Body of pancreas (tissue), 4 donors: ENCODE measurements at regions of chr2 and their contacts with region 1.

Region 1: GRCh38 chr2:209977386-209978239 is 24.8 kb upstream of the RPE start:
- DNase-seq: no peak
- ATAC-seq: peak; percentile 62
- H3K4me3 ChIP-seq: no peak overlapping the region
- H3K27ac ChIP-seq: no peak overlapping the region
- H3K4me1 ChIP-seq: no peaks in the 10 kb centered on the region
- H3K27me3 ChIP-seq: no peaks in the 10 kb centered on the region
- CTCF ChIP-seq: peak; percentile 51 to 80 (median 69)
- POLR2A ChIP-seq: no peak

Region 2: DNA sequence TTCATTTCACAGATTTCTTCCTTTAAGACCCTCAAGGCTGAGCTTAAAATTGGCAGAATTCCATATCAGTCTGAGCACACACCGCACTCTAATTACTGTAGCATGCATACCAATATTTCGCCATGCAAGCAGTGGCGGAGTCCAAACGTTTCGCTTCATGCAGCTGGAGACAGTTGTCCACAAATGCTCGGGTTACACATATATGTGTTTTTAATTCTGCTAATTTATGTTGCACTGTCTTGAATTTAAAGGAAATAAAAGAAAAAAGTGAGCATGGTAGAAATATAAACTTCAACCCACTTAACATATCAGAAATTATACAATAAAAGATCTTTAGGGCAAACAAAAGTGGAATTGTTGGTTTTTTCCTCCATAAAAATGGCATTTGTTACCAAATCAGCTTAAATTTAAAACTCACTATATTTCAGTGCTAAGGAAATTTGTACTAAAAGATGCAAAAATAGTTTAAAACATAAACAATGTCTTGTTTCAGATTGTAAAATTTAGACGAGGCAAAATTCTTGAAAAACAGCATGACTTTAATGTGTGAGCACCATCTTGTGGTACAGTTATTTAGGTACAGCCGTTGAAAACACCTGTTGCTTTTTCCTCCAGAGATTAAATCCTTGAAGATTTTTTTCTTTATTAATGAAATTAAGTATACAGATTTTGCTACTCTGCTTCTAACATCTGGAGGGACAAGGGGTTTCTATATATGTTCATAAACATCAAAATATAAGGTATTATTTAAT is 217.7 kb after region 1 on chr2:
- intact Hi-C with region 1: loop called (anchors 5 kb)
- DNase-seq: peak in 3 of 4 donors; percentile 20 to 51 (median 37)
- ATAC-seq: peak; percentile 72
- H3K4me3 ChIP-seq: no peak overlapping the region
- H3K27ac ChIP-seq: peak overlapping the region in 2 of 4 donors; percentile 8 to 72
- H3K4me1 ChIP-seq: peaks cover 34% of the 10 kb centered on the region
- H3K27me3 ChIP-seq: no peaks in the 10 kb centered on the region
- CTCF ChIP-seq: peak; percentile 51 to 87 (median 74)
- POLR2A ChIP-seq: no peak

Region 3: DNA sequence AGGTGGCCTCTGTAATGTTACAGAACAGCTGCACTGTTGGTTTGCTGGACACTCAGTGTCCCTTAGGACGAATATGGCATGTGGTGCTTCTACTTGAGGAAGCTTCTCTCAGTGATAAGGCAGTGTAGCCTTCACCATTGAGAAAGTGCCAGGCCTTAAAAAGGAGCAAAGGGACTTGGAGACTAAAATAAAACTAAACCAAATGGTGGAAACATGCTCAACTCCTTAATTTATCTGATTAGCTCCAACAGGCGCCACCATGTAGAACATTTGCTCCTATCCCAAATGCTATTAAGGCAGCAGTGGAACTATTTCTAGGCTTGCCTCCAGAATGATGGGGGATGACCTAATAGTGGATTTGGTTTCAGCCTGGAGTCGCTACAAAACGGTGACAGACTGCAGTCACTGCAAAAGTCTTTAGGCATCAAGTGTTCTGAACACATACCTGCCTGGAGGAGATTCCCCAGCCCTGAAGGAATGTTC is 414.9 kb after region 1 on chr2:
- intact Hi-C with region 1: loop called (anchors 5 kb)
- DNase-seq: no peak
- ATAC-seq: no peak
- H3K4me3 ChIP-seq: no peak overlapping the region
- H3K27ac ChIP-seq: no peak overlapping the region
- H3K4me1 ChIP-seq: no peaks in the 10 kb centered on the region
- H3K27me3 ChIP-seq: no peaks in the 10 kb centered on the region
- CTCF ChIP-seq: no peak
- POLR2A ChIP-seq: no peak